ENCODE measurements at regions of chr15 and their contacts with region 1.

Region 1: DNA sequence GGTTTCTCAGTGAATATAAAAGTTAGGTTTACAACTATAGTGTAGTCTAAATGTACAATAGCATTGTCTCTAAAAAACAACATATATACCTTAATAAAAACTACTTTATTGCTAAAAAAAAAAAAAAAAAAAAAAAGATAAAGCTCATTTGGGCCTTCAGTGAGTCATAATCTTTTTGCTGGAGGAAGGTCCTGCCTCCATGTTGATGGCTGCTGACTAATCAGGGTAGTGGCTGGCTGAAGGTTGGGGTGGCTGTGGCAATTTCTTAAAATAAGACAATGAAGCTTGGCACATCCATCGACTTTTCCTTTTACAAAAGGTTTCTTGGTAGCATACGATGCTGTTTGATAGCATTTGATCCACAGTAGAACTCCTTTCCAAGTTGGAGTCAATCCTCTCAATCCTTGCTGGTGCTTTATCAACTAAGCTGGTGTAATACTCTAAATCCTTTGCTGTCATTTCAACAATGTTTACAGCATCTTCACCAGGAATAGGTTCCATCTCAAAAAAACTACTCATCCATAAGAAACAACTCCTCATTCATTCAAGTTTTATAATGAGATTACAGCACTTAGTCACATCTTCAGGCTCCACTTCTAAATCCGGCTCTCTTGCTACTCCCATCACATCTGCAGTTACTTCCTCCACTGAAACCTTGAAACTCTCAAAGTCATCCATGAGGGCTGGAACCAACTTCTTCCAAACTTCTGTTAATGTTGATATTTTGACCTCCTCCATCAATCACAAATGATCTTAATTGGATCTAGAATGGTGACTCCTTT is 13.3 kb downstream of the ZNF280D start:
- DNase-seq: no peak
- ATAC-seq: no peak
- H3K4me3 ChIP-seq: no peak overlapping the region
- H3K27ac ChIP-seq: no peak overlapping the region
- H3K4me1 ChIP-seq: no peaks in the 10 kb centered on the region
- H3K27me3 ChIP-seq: no peaks in the 10 kb centered on the region
- CTCF ChIP-seq: no peak
- EP300 ChIP-seq: no peak
- POLR2A ChIP-seq: no peak
- RAD21 ChIP-seq: no peak

Region 2: DNA sequence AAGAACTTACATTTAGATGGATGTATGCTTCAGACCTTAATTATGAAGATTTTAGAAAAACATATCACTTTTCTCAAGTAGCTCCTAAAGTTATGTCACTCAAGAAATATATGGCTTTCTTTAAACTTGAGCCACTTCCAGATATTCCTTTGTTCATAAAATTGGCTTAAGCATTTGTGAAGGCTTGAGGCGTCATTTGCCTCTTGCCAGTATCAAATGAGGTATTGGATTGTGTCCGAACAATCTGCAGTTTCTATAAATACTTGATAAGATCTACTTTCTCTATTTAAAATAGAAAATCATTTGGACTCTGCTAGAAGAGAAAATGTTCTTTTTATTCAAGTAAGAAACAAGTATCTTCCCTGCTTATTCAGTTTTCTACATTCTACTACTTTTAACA is 1625.8 kb before region 1 on chr15:
- CTCF ChIA-PET with region 1: no interaction called
- POLR2A ChIA-PET with region 1: no interaction called
- in situ Hi-C with region 1: no loop called
- intact Hi-C with region 1: no loop called
- DNase-seq: no peak
- ATAC-seq: no peak
- H3K4me3 ChIP-seq: no peak overlapping the region
- H3K27ac ChIP-seq: no peak overlapping the region
- H3K4me1 ChIP-seq: no peaks in the 10 kb centered on the region
- H3K27me3 ChIP-seq: no peaks in the 10 kb centered on the region
- CTCF ChIP-seq: no peak
- EP300 ChIP-seq: no peak
- POLR2A ChIP-seq: no peak
- RAD21 ChIP-seq: no peak

Region 3: DNA sequence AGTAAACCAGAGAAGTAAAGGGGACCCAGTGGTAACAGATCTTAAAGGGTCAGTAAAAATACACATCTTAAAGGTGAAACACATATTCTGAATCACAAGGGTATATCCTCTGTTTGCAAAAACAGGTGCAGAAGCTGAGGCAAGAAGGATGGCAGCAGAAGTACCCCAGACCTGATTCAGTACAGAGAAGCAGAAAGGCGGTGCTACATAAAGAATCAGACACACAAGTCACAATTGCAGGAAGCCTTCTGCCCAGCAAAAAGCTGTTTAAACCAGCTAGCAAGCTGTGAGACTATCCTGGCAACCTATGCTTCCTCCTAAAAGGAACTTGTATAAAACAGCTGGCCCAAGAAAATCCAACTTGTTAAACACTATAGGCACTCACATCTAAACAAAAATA is 36.1 kb before region 1 on chr15:
- CTCF ChIA-PET with region 1: no interaction called
- POLR2A ChIA-PET with region 1: no interaction called
- in situ Hi-C with region 1: no loop called
- intact Hi-C with region 1: loop called (anchors 5 kb)
- DNase-seq: no peak
- ATAC-seq: no peak
- H3K4me3 ChIP-seq: no peak overlapping the region
- H3K27ac ChIP-seq: no peak overlapping the region
- H3K4me1 ChIP-seq: no peaks in the 10 kb centered on the region
- H3K27me3 ChIP-seq: no peaks in the 10 kb centered on the region
- CTCF ChIP-seq: no peak
- EP300 ChIP-seq: no peak
- POLR2A ChIP-seq: no peak
- RAD21 ChIP-seq: no peak

Region 4: DNA sequence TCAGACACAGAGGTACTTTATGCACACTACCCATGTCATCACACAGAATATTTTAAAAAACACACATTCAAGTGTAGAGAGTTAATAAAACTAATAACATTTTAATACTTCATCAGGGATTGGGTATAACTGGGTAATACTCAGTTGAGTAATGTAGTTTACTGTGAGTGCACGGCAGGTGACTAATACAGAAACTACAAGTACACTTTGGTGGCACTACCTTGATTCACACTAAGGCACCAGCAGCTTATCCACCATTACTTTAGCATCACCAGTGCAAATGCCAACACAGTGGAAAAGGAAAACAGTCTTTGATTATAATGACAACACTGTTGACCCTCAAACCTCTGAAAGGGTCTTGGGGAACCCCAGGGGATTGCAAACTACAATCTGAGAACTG is 20.2 kb before region 1 on chr15:
- CTCF ChIA-PET with region 1: no interaction called
- POLR2A ChIA-PET with region 1: no interaction called
- in situ Hi-C with region 1: no loop called
- intact Hi-C with region 1: no loop called
- DNase-seq: no peak
- ATAC-seq: no peak
- H3K4me3 ChIP-seq: no peak overlapping the region
- H3K27ac ChIP-seq: no peak overlapping the region
- H3K4me1 ChIP-seq: no peaks in the 10 kb centered on the region
- H3K27me3 ChIP-seq: no peaks in the 10 kb centered on the region
- CTCF ChIP-seq: no peak
- EP300 ChIP-seq: no peak
- POLR2A ChIP-seq: no peak
- RAD21 ChIP-seq: no peak

Region 5: DNA sequence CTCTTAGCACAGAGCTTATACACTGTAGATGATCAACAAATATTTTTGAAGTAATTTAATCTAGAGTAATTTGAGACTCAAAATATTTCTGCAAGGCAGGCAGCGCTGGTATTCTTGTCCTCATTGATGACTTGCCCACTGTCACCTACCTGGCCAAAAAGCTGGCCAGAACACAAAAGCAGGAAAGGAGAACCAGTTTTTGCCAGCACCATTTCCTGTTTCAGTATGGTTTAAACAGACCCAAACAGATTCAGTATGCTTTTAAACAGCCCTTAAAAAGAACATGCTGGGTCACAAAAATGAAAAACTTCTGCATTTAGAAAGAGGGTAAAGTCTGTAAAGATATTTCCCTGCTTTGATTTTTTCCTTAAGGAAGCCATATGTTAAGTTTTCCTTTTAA is 55.7 kb after region 1 on chr15:
- CTCF ChIA-PET with region 1: no interaction called
- POLR2A ChIA-PET with region 1: no interaction called
- in situ Hi-C with region 1: no loop called
- intact Hi-C with region 1: no loop called
- DNase-seq: no peak
- ATAC-seq: no peak
- H3K4me3 ChIP-seq: no peak overlapping the region
- H3K27ac ChIP-seq: no peak overlapping the region
- H3K4me1 ChIP-seq: peaks cover 29% of the 10 kb centered on the region
- H3K27me3 ChIP-seq: no peaks in the 10 kb centered on the region; a peak in 1 of 5 replicates
- CTCF ChIP-seq: no peak
- EP300 ChIP-seq: no peak
- POLR2A ChIP-seq: no peak
- RAD21 ChIP-seq: no peak

Region 6: GRCh38 chr15:56917652-56918045 is 197.7 kb after region 1 on chr15:
- CTCF ChIA-PET with region 1: no interaction called
- POLR2A ChIA-PET with region 1: no interaction called
- in situ Hi-C with region 1: no loop called
- intact Hi-C with region 1: no loop called
- DNase-seq: no peak
- ATAC-seq: no peak
- H3K4me3 ChIP-seq: peak overlapping the region in 1 of 3 experiments; percentile 88; a peak in 1 of 6 replicates
- H3K27ac ChIP-seq: no peak overlapping the region
- H3K4me1 ChIP-seq: peaks cover 27% of the 10 kb centered on the region
- H3K27me3 ChIP-seq: no peaks in the 10 kb centered on the region
- CTCF ChIP-seq: no peak
- EP300 ChIP-seq: no peak
- POLR2A ChIP-seq: no peak
- RAD21 ChIP-seq: no peak

Measured in HepG2 (cell line).